ENCODE measurements at regions of chr15 and their contacts with region 1.

Region 1: DNA sequence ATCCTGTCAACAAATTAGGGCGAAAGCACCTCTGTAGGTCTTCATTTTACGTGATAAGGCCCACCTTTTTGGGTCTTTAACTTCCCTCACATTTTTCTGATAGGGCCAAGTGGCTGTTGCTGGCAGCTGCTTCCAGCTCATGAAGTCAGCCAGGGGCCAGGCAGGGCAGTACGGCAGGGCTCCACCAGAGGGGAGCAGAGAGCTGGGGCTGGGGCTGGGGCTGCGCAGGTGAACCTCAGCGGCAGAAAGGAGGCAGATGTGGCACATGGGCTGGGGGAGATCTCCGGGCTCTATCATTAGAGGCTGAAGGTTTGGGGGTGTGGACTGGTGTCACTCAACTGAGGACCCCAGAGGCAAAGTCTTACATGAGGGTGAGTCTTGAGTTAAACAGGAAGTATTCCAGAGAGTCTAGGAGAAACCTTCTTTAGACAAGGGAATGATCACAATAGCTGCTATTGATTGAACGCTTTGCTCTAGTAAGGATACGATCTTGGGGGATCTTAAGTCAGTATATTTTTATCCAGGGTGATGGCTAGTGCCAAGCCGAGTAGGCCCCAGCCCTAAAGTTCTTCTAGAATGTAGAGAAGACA is 62.8 kb upstream of the MEX3B start:
- DNase-seq: peak; percentile 63 to 80
- ATAC-seq: peak; percentile 91 to 96
- H3K4me3 ChIP-seq: no peak overlapping the region
- H3K27ac ChIP-seq: 0 out of 6 replicates have a peak overlapping the region, but pooled peaks of 1 of the 2 experiments have one; percentile 25
- H3K4me1 ChIP-seq: no peaks in the 10 kb centered on the region
- CTCF ChIP-seq: peak; percentile 88
- EP300 ChIP-seq: no peak
- POLR2A ChIP-seq: no peak
- RAD21 ChIP-seq: peak; percentile 93 to 98

Region 2: GRCh38 chr15:81480645-81481053 is 627.9 kb before region 1 on chr15:
- CTCF ChIA-PET with region 1: interaction called, 18 read pairs
- POLR2A ChIA-PET with region 1: no interaction called
- DNase-seq: peak in 1 of 2 experiments; percentile 61
- ATAC-seq: peak; percentile 44 to 90; a peak in 4 of 6 replicates
- H3K4me3 ChIP-seq: no peak overlapping the region
- H3K27ac ChIP-seq: no peak overlapping the region
- H3K4me1 ChIP-seq: no peaks in the 10 kb centered on the region
- CTCF ChIP-seq: peak; percentile 94
- EP300 ChIP-seq: no peak
- POLR2A ChIP-seq: no peak
- RAD21 ChIP-seq: peak; percentile 86 to 92

Region 3: GRCh38 chr15:82086243-82086995 is 22.2 kb before region 1 on chr15:
- CTCF ChIA-PET with region 1: interaction called, 30 read pairs
- POLR2A ChIA-PET with region 1: no interaction called
- DNase-seq: no peak
- ATAC-seq: no peak
- H3K4me3 ChIP-seq: no peak overlapping the region
- H3K27ac ChIP-seq: no peak overlapping the region
- H3K4me1 ChIP-seq: no peaks in the 10 kb centered on the region
- CTCF ChIP-seq: no peak
- EP300 ChIP-seq: no peak
- POLR2A ChIP-seq: no peak
- RAD21 ChIP-seq: no peak

Region 4: DNA sequence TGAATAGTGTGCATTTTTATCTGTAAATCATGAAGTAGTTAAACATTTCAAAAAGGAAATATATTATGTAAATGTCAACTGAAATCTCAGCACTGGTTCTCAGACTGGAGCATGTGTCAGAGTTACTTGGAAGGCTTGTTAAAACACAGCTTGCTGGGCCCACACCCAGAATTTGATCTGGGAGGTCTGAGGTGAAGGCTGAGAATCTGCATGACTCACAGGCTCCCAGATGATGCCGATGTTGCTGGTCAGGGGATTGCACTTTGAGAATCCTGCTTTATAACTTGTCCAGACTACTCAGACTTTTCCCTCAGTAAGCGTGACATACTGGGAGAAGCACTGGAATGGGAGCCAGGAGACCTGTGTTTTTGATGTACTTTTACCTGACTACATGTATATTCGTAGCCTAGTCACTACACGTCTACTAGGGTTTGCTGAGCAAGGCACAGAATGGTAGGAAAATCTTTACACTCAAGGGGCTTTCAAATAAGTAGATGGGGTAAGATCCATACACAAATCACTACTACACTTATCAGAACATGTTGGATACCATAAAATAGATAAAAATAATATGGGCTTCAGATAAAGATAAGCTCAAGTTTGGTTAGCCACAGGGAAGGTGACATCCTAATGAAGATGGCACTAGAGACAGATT is 14.3 kb after region 1 on chr15:
- CTCF ChIA-PET with region 1: interaction called, 570 read pairs
- POLR2A ChIA-PET with region 1: no interaction called
- DNase-seq: peak; percentile 63 to 80
- ATAC-seq: peak; percentile 92 to 94
- H3K4me3 ChIP-seq: no peak overlapping the region
- H3K27ac ChIP-seq: peak overlapping the region; percentile 45 to 73; a peak in 5 of 6 replicates
- H3K4me1 ChIP-seq: peaks cover 25% of the 10 kb centered on the region
- CTCF ChIP-seq: no peak
- EP300 ChIP-seq: peak; percentile 46 to 56; a peak in 2 of 5 replicates
- POLR2A ChIP-seq: no peak
- RAD21 ChIP-seq: no peak

Region 5: DNA sequence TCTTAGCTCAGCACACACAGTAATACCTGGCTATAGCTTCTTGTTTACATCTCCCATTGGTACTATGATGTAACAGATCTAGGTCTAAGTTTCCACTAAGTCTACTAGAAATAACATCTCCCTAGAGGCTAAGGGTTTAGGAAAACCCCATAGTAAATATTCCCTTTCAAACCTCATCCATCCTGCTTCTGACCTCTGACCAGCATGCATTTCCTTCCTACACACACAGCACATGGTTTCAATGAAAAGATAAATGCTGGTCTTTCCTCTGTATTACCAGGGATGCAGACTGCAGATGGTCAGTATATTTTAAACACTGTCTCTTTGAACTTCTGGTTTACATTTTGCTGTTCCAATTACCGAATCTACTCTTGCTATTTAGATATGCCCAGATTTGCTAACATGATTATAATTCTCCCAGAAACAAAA is 57.4 kb after region 1 on chr15:
- CTCF ChIA-PET with region 1: interaction called, 15 read pairs
- POLR2A ChIA-PET with region 1: no interaction called
- DNase-seq: no peak
- ATAC-seq: no peak
- H3K4me3 ChIP-seq: no peak overlapping the region
- H3K27ac ChIP-seq: no peak overlapping the region
- H3K4me1 ChIP-seq: no peaks in the 10 kb centered on the region
- CTCF ChIP-seq: no peak
- EP300 ChIP-seq: no peak
- POLR2A ChIP-seq: no peak
- RAD21 ChIP-seq: no peak

Region 6: DNA sequence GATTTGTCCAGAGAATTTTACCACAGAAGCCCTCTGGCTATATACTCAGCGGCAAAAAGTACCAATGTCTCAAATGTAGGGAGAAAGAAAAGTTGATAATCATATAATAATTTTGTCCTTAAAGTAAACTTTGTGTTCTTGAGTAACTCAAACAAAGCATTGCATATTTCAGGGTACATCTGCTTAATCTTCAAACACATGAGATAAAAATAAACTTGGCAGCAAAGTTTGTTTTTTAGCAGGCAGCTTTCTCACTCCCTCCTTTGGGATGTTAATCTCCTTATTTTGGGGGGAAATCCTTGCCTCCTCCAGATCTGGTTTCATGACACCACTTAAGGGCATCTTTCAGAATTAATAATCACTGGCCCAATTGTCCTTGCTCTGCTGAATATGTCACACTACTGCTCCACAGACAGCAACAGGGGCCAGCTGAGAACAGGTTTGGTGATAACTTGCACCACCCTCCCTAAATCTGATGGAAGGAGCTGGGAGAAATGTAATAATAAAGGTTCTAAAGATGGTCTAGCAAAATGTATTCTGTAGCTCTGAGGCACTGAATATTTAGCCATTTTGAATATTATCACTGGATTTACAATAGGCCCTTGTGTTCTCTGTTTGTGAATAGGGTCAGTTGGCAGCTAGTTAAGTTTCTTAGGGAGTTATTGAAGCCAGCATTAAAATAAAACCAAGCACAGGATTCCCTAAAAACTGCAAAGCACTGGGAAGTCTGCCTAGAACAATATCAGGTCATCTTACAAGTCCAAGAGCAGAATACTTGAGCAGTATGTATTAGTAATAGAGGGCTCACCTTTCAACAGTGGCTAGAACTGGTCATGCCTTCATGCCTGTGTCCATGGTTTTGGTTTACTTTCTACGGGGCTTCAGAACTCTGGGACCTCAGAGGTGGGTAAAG is 74.8 kb after region 1 on chr15:
- CTCF ChIA-PET with region 1: interaction called, 15 read pairs
- POLR2A ChIA-PET with region 1: no interaction called
- DNase-seq: no peak
- ATAC-seq: no peak
- H3K4me3 ChIP-seq: no peak overlapping the region
- H3K27ac ChIP-seq: no peak overlapping the region
- H3K4me1 ChIP-seq: peaks cover 3% of the 10 kb centered on the region
- CTCF ChIP-seq: no peak
- EP300 ChIP-seq: no peak
- POLR2A ChIP-seq: no peak
- RAD21 ChIP-seq: no peak

Measured in A549 (cell line).